CD8-positive, alpha-beta memory T cell (primary cell): ENCODE measurements at regions of chr10 and their contacts with region 1.

Region 1: GRCh38 chr10:124647421-124648130 is 96.6 kb downstream of the FAM53B start:
- DNase-seq: peak; percentile 64 to 86 (median 66)
- H3K4me3 ChIP-seq: peak overlapping the region; percentile 41
- H3K4me3 Mint-ChIP-seq: peak overlapping the region; percentile 75 to 95 (median 84)
- H3K27ac ChIP-seq: peak overlapping the region; percentile 75
- H3K27ac Mint-ChIP-seq: peak overlapping the region; percentile 96 to 100 (median 98)
- H3K4me1 ChIP-seq: peaks cover 90% of the 10 kb centered on the region
- H3K4me1 Mint-ChIP-seq: peaks cover 92 to 100% (median 94%) of the 10 kb centered on the region in 3 donors
- H3K27me3 ChIP-seq: no peaks in the 10 kb centered on the region
- H3K27me3 Mint-ChIP-seq: no peaks in the 10 kb centered on the region

Region 2: GRCh38 chr10:124530215-124530665 is 117.3 kb before region 1 on chr10:
- CTCF ChIA-PET with region 1: interaction called, 11 read pairs
- POLR2A ChIA-PET with region 1: no interaction called
- DNase-seq: peak; percentile 75 to 89 (median 77)
- H3K4me3 ChIP-seq: no peak overlapping the region
- H3K4me3 Mint-ChIP-seq: peak overlapping the region in 2 of 7 donors; percentile 48 to 81
- H3K27ac ChIP-seq: no peak overlapping the region
- H3K27ac Mint-ChIP-seq: peak overlapping the region in 3 of 8 donors; percentile 38 to 92 (median 68)
- H3K4me1 ChIP-seq: no peaks in the 10 kb centered on the region
- H3K4me1 Mint-ChIP-seq: peaks cover 3 to 5% (median 5%) of the 10 kb centered on the region in 3 donors
- H3K27me3 ChIP-seq: no peaks in the 10 kb centered on the region
- H3K27me3 Mint-ChIP-seq: no peaks in the 10 kb centered on the region

Region 3: DNA sequence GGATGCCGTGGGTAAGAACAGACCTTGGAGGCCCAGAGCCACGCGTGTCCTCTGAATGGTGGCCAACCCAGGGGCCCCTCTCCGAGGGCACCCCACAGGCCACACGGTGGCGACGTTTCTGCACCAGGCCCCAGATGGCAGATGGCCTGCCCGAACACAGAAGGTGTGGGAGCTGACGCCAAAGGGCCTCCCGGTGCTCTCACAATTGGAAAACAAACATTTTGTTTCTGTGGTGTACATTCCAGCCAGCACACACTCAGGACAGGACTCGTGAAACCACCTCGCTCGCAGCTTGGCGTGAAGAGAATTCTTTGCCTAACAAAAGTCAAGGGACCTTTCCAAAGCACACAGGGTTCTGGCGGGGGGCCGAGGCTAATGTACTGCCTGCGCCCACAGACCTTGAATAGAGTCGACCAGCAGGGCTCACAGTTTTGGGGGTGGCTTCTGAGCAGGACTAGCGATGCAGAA is 15.5 kb before region 1 on chr10:
- CTCF ChIA-PET with region 1: interaction called, 28 read pairs
- POLR2A ChIA-PET with region 1: interaction called, 3 read pairs
- DNase-seq: peak in 4 of 5 donors; percentile 26 to 64 (median 32)
- H3K4me3 ChIP-seq: no peak overlapping the region
- H3K4me3 Mint-ChIP-seq: peak overlapping the region in 1 of 7 donors; percentile 13
- H3K27ac ChIP-seq: no peak overlapping the region
- H3K27ac Mint-ChIP-seq: peak overlapping the region in 7 of 8 donors; percentile 50 to 94 (median 82)
- H3K4me1 ChIP-seq: peaks cover 64% of the 10 kb centered on the region
- H3K4me1 Mint-ChIP-seq: peaks cover 65 to 94% (median 81%) of the 10 kb centered on the region in 3 donors
- H3K27me3 ChIP-seq: no peaks in the 10 kb centered on the region
- H3K27me3 Mint-ChIP-seq: no peaks in the 10 kb centered on the region

Region 4: DNA sequence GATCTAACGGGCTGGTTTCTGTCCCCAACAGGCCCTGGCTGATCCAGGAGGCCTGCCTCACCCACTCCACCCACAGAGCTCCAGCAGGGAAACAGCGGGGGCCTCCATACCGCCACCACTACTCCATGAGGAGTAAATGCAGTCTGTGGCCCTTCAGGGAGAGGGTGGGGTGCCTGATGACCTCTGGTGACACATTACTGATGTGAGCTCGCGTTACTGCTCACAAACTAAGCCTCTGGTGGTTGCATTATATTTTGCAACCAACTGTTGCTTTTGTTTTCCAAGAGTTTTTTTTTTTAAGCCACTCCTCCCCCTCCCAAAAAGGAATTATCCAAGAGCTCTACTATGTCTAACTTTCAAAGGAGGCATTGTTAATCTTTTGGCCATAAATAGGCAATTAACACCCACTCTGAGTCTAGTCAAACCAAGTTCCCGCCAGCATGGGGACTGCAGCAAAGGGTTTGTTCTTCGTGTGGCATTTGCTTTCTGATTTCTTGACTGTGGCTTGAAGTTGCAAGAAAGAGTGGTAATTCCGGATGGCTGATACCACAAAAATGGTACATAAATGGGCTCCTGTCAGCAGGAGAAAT is 24.0 kb after region 1 on chr10:
- CTCF ChIA-PET with region 1: interaction called, 15 read pairs
- POLR2A ChIA-PET with region 1: interaction called, 3 read pairs
- DNase-seq: no peak
- H3K4me3 ChIP-seq: peak overlapping the region; percentile 3
- H3K4me3 Mint-ChIP-seq: peak overlapping the region; percentile 14 to 85 (median 59)
- H3K27ac ChIP-seq: peak overlapping the region; percentile 5
- H3K27ac Mint-ChIP-seq: peak overlapping the region; percentile 76 to 97 (median 88)
- H3K4me1 ChIP-seq: peaks cover 100% of the 10 kb centered on the region
- H3K4me1 Mint-ChIP-seq: peaks cover 87 to 98% (median 95%) of the 10 kb centered on the region in 3 donors
- H3K27me3 ChIP-seq: no peaks in the 10 kb centered on the region
- H3K27me3 Mint-ChIP-seq: no peaks in the 10 kb centered on the region

Region 5: GRCh38 chr10:124688889-124689670 is 41.5 kb after region 1 on chr10:
- CTCF ChIA-PET with region 1: interaction called, 10 read pairs
- POLR2A ChIA-PET with region 1: interaction called, 13 read pairs
- DNase-seq: peak in 4 of 5 donors; percentile 43 to 82 (median 62)
- H3K4me3 ChIP-seq: no peak overlapping the region
- H3K4me3 Mint-ChIP-seq: peak overlapping the region; percentile 1 to 87 (median 75)
- H3K27ac ChIP-seq: peak overlapping the region; percentile 48
- H3K27ac Mint-ChIP-seq: peak overlapping the region; percentile 82 to 99 (median 96)
- H3K4me1 ChIP-seq: peaks cover 79% of the 10 kb centered on the region
- H3K4me1 Mint-ChIP-seq: peaks cover 73 to 93% (median 93%) of the 10 kb centered on the region in 3 donors
- H3K27me3 ChIP-seq: no peaks in the 10 kb centered on the region
- H3K27me3 Mint-ChIP-seq: no peaks in the 10 kb centered on the region

Region 6: DNA sequence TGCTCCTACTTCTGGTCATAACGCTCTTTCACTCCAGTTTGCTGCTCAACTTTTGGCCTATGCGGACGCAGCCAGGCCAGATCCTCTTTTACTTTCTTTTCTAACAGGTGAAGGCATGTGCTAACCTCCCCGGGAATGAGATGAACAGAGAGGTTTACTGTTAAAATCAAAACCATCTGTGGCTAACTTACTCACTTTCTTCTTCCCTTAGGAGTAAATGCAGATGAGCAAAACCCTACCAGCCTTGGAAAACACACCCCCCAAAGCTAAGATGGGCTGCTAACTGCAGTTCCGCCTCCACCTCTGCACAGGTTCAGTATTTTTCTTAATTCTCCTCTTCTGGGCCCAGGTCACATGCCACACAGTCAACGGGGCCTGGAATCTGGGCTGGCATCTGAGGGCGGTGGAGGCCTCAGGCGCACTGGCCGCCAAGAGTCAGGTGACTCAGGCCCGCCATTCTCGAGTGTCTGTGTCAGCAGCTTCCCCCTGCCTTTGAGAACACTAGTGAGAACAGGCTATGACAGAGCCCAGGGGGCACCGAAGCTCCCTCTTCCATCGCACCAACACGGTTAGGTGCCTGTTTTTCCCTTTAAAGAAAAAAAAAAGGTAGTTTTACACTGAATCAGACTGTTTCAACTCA is 85.5 kb after region 1 on chr10:
- CTCF ChIA-PET with region 1: interaction called, 13 read pairs
- POLR2A ChIA-PET with region 1: interaction called, 4 read pairs
- DNase-seq: peak in 3 of 5 donors; percentile 42 to 74 (median 46)
- H3K4me3 ChIP-seq: peak overlapping the region; percentile 33
- H3K4me3 Mint-ChIP-seq: peak overlapping the region; percentile 67 to 95 (median 82)
- H3K27ac ChIP-seq: peak overlapping the region; percentile 65
- H3K27ac Mint-ChIP-seq: peak overlapping the region; percentile 89 to 99 (median 96)
- H3K4me1 ChIP-seq: peaks cover 100% of the 10 kb centered on the region
- H3K4me1 Mint-ChIP-seq: peaks cover 95 to 100% (median 97%) of the 10 kb centered on the region in 3 donors
- H3K27me3 ChIP-seq: no peaks in the 10 kb centered on the region
- H3K27me3 Mint-ChIP-seq: no peaks in the 10 kb centered on the region

Region 7: GRCh38 chr10:125531465-125531864 is 883.9 kb after region 1 on chr10:
- CTCF ChIA-PET with region 1: no interaction called
- POLR2A ChIA-PET with region 1: no interaction called
- DNase-seq: no peak
- H3K4me3 ChIP-seq: no peak overlapping the region
- H3K4me3 Mint-ChIP-seq: no peak overlapping the region
- H3K27ac ChIP-seq: no peak overlapping the region
- H3K27ac Mint-ChIP-seq: no peak overlapping the region
- H3K4me1 ChIP-seq: no peaks in the 10 kb centered on the region
- H3K4me1 Mint-ChIP-seq: no peaks in the 10 kb centered on the region
- H3K27me3 ChIP-seq: no peaks in the 10 kb centered on the region
- H3K27me3 Mint-ChIP-seq: peaks cover 0 to 6% of the 10 kb centered on the region in 2 donors